Ovary (tissue), 10 donors: ENCODE measurements at regions of chr15 and their contacts with region 1.

Region 1: DNA sequence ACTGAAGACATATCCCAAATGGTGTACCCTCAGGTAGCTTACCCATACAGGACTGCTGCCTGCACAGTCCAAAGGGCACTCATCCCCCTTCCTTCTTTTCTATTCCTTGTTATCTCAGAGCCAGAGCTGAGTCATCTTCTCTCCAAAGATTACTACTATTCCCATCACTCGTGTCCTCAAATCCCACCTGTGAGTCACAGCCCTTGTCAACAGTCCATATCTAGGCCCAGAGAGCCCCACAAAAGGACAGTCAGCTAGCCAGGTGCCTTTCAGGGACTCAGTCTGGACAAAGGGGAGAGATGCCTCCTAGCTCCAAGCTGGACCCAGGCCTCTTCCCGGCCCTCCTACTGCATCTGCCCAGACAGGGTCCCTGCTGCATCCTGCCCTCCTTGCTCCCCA is 11.0 kb downstream of the PARP16 start:
- DNase-seq: no peak
- H3K4me3 ChIP-seq: no peak overlapping the region
- H3K27ac ChIP-seq: no peak overlapping the region
- H3K4me1 ChIP-seq: no peaks in the 10 kb centered on the region
- H3K27me3 ChIP-seq: no peaks in the 10 kb centered on the region
- CTCF ChIP-seq: no peak
- EP300 ChIP-seq: no peak
- POLR2A ChIP-seq: no peak

Region 2: DNA sequence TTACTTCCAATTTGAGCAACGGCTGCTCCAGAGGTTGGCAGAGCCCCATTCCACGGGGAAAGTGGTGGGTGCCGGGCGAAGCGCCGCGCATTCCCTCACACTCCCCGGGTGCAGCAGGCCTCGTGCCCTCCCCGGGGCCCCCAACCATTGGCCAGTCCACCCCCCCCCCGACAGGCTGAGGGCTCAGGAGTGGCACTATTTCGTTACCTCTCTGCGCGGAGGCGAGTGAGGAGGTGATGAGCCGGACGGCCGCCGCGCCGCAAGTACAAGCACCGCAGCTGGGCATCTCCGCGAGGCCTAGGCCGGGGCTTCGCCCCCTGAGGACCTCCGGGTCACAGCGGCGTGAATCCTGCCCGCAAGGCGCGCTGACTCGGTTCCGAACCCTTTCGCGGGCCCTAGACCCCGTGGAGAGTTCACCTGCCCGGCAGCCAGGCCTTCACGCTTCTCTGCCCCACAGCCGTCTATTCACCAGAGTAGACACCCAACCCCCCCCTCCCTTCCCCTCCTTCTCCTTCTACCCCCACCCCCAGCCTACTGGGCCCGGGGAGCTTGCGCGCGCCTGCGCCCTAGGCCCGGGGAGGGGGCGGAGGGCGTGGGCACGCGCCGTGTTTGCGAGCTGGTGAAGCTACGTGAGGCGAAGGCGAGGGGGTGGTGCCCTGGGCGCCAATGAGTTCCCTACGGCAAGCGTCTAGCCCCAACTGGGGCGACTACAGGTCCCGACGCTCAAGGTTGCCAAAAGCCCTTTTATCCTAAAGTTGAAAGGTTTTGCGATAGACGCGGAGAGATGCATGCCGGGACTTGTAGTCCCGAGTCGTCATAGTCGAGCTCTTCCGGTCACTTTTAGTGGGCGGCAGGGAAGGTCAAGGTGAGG is 90.6 kb before region 1 on chr15 and contains the start of gene CLPX:
- intact Hi-C with region 1: loop called in 3 of 4 experiments (anchors 2 to 5 kb)
- DNase-seq: peak; percentile 91 to 96 (median 92)
- H3K4me3 ChIP-seq: peak within 1 kb of the TSS; percentile 95
- H3K27ac ChIP-seq: peak within 1 kb of the TSS; percentile 94 to 97
- H3K4me1 ChIP-seq: peaks cover 2% of the 10 kb centered on the region
- H3K27me3 ChIP-seq: no peaks in the 10 kb centered on the region
- CTCF ChIP-seq: peak in 1 of 3 donors; percentile 7
- EP300 ChIP-seq: no peak
- POLR2A ChIP-seq: peak; percentile 71
- total RNA-seq, gene CLPX: 37.1 to 44.2 (median 41.1) TPM

Region 3: DNA sequence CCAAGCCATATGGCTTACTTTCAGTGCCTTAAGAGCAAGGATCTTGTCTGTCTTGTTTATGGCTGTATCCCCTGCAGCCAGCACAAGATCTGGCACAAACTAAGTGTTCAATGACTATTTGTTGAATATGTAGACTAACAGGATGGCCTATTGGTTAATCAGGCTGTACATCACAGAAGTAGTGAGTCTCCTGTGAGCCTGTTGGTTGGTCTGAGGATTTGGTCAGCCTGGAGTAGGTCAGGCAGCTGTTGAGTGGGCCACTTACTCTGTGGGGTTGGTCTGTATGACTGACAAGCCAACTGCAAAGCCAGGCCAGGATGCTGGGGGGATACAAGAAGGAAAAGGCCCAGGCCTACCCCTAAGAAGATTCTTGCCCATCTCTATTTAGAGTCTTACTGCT is 31.1 kb before region 1 on chr15:
- intact Hi-C with region 1: loop called in 1 of 4 experiments (anchors 2 kb)
- DNase-seq: no peak
- H3K4me3 ChIP-seq: no peak overlapping the region
- H3K27ac ChIP-seq: peak overlapping the region in 1 of 2 donors; percentile 23
- H3K4me1 ChIP-seq: peaks cover 7% of the 10 kb centered on the region
- H3K27me3 ChIP-seq: no peaks in the 10 kb centered on the region
- CTCF ChIP-seq: no peak
- EP300 ChIP-seq: no peak
- POLR2A ChIP-seq: no peak